Cardiac septum (tissue), 1 donor: ENCODE measurements at regions of chr14 and their contacts with region 1.

Region 1: GRCh38 chr14:69766984-69767368 is at the start of gene SRSF5:
- DNase-seq: peak; percentile 99
- total RNA-seq, gene SRSF5: 206 TPM

Region 2: DNA sequence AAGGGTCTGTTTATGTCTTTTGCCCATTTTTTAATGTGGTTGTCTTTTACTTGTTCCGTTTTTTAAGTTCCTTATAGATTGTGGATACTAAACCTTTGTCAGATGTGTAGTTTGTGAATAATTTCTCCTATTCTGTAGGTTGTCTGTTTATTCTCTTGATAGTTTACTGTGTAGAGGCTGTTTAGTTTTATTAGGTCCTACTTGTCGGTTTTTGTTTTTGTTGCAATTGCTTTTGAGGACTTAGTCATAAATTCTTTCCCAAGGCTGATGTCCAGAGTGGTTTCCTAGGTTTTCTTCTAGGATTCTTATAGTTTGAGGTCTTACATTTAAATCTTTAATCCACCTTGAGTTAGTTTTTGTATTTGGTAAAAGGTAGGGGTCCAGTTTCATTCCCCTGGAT is 334.6 kb before region 1 on chr14:
- intact Hi-C with region 1: no loop called
- DNase-seq: no peak

Region 3: DNA sequence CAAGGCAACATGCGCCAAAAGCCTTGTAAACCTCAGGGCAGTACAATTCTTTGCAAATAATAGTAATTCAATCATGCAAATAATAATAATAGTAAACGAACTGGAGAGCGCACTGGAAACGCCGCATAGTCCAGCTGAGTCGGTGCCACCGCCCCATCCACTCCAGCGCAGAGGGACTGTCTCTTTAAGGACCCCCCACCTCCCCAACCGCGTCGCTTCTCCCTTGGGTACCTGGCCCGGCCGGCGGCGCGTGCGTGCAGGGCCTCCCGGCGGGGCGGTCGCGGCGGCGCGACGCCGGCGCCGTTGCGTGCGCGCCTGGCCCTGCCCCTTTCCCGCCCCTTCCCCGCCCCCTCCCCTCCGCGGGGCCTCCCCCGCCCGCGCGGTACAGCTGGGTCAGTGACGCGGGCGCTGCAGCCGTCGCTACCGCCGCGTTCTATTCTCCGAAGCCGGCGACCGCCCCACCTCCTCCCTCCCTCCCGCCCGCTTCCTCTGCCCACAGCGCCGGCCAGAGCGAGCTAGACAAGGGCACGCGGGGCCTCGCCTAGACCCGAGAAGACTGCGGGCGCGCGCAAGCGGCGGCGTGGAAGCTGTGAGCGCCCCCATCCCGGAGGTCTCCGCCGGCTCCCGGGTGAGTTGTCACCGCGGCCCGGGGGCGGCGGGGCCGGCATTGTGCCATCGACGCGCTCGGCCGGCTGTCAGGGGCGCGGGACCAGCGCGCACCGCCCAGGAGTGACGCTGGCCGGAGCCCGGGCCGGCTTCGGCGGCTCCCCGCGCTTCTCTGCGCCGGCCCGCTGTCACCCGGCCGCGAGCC is 155.6 kb before region 1 on chr14 and contains the start of gene SUSD6:
- intact Hi-C with region 1: loop called (anchors 2 kb)
- DNase-seq: peak; percentile 97
- total RNA-seq, gene SUSD6: 26.9 TPM

Region 4: DNA sequence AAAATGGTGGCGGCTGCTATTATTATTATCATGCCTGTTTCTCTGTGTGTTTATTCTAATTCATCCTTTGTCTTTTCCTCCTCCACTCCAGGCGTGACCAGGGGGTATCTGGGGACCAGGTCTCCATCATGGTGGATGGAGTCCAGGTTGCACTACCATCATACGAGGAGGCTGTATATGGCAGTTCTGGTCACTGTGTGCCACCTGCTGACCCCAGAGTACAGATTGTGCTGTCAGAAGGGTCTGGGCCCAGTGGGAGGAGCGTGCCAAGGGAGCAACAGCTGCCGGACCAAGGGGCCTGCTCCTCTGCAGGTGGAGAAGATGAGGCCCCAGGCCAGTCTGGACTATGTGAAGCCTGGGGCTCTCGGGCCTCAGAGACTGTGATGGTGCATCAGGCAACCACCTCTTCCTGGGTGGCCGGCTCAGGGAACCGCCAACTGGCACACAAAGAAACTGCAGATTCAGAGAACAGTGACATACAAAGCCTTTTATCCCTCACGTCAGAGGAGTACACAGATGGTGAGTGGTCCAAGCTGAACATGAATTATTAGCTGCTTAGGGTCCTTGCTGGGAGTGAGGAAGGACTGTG is 58.3 kb before region 1 on chr14:
- intact Hi-C with region 1: loop called (anchors 10 kb)
- DNase-seq: no peak

Region 5: DNA sequence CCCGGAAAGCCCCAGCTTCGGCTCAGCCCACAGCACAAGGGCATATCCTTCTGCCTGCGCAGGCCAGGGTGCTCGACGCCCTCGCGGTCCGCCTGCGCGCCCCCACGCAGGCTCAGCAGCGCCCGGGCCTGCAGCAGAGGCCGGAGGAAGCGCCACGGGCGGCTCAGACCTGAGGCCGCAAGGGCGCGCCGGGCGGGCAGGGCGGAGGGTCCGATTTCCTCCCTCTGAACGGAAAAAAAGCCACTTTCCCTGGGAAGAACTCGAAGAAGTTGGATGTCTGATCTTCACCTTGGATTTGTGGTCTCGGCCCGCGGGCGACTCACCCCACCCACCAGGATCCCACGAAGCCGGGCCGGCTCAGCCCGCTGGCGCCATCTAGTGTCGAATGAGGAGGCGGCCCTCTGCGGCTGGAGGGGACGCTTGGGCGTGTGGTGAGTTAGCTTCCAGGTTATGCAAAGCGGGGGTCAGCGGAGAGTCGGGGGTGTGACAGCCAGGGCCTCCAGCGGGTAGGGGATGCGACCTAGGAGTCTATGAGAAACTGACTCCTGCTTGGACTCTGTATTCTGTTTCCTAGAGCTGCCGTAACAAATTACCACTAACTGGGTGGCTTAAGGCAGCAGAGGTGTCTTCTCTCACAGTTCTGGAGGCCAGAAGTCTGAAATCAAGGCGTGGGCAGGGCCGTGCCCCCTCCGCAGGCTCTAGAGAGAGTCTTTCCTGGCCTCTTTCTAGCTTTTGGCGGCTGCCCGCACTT is 40.0 kb before region 1 on chr14:
- intact Hi-C with region 1: loop called (anchors 5 kb)
- DNase-seq: peak; percentile 94

Region 6: GRCh38 chr14:69818757-69819191 is 51.8 kb after region 1 on chr14:
- intact Hi-C with region 1: no loop called
- DNase-seq: no peak